Mammary epithelial cell (primary cell): ENCODE measurements at regions of chr12 and their contacts with region 1.

Region 1: GRCh38 chr12:21392384-21392783 is 19.7 kb downstream of the IAPP start:
- DNase-seq: no peak
- H3K4me3 ChIP-seq: no peak overlapping the region
- H3K27ac ChIP-seq: no peak overlapping the region
- H3K4me1 ChIP-seq: no peaks in the 10 kb centered on the region
- H3K27me3 ChIP-seq: no peaks in the 10 kb centered on the region
- CTCF ChIP-seq: no peak

Region 2: DNA sequence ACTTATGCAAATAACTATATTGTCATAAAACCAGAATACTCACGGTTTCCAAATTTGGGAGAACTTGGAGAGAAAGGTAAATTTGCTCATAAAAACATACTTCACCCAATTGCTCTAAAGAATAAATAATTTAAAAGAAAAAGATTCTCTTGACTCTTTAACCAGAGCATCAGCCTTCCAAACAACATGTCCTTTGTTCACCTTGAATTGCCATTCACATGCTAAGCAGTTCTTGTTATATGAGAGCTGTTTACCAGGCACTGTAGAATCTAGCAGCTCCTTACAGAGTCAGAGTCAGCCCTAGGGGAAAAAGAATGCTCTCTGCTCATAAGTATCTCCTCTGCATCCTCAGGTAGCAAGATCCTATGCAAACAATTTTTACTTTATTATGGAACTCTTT is 67.8 kb before region 1 on chr12:
- CTCF ChIA-PET with region 1: no interaction called
- dilution Hi-C with region 1: no loop called
- in situ Hi-C with region 1: no loop called
- intact Hi-C with region 1: loop called (anchors 10 kb)
- DNase-seq: no peak
- H3K4me3 ChIP-seq: no peak overlapping the region
- H3K27ac ChIP-seq: no peak overlapping the region
- H3K4me1 ChIP-seq: no peaks in the 10 kb centered on the region
- H3K27me3 ChIP-seq: no peaks in the 10 kb centered on the region
- CTCF ChIP-seq: no peak